MCF 10A (cell line): ENCODE measurements at regions of chr1 and their contacts with region 1.

Region 1: GRCh38 chr1:174022080-174022975 is at the start of gene RC3H1:
- DNase-seq: peak; percentile 95
- H3K4me3 Mint-ChIP-seq: peak within 1 kb of the TSS; percentile 82
- H3K27ac Mint-ChIP-seq: peak within 1 kb of the TSS; percentile 95
- H3K4me1 Mint-ChIP-seq: peaks cover 38% of the 10 kb centered on the region
- H3K27me3 Mint-ChIP-seq: no peaks in the 10 kb centered on the region
- CTCF ChIP-seq: no peak
- total RNA-seq, gene RC3H1: 25.7 and 26.9 TPM in 2 replicates

Region 2: DNA sequence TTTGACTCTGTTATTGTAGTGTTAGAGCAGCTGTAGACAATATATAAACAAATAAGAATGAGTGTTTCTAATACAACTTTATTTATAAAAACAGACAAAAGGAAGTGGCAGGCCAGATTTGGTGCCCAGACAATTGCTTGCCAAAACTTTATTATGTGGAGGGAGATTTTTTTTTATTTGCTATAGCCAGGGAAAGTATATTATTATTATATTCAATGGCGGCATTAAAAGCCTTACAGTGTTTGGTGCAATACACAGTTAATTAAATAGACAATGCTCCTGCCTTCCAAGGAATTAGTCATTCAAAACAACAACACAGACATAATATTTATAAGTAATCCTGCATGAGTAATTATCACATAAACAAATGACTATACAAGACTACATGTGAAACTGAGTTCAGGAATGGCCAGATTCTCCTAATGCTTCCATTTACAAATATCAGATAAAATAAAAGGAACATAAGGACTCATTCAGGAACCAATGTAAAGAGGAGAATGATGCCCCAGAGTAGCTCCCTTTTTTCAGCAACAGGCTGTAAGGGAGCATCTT is 10.4 kb after region 1 on chr1:
- CTCF ChIA-PET with region 1: interaction called, 3 read pairs
- POLR2A ChIA-PET with region 1: interaction called, 19 read pairs
- intact Hi-C with region 1: no loop called
- DNase-seq: no peak
- H3K4me3 Mint-ChIP-seq: no peak overlapping the region
- H3K27ac Mint-ChIP-seq: no peak overlapping the region
- H3K4me1 Mint-ChIP-seq: no peaks in the 10 kb centered on the region
- H3K27me3 Mint-ChIP-seq: no peaks in the 10 kb centered on the region
- CTCF ChIP-seq: no peak

Region 3: GRCh38 chr1:174153085-174153825 is 130.9 kb after region 1 on chr1:
- CTCF ChIA-PET with region 1: no interaction called
- POLR2A ChIA-PET with region 1: interaction called, 15 read pairs
- intact Hi-C with region 1: loop called (anchors 5 kb)
- DNase-seq: peak; percentile 84
- H3K4me3 Mint-ChIP-seq: no peak overlapping the region
- H3K27ac Mint-ChIP-seq: peak overlapping the region; percentile 20
- H3K4me1 Mint-ChIP-seq: peaks cover 27% of the 10 kb centered on the region
- H3K27me3 Mint-ChIP-seq: no peaks in the 10 kb centered on the region
- CTCF ChIP-seq: no peak

Region 4: GRCh38 chr1:174159252-174160108 is 137.2 kb after region 1 on chr1 and contains the start of gene RABGAP1L:
- CTCF ChIA-PET with region 1: no interaction called
- POLR2A ChIA-PET with region 1: interaction called, 17 read pairs
- intact Hi-C with region 1: loop called (anchors 5 kb)
- DNase-seq: peak; percentile 96
- H3K4me3 Mint-ChIP-seq: peak within 1 kb of the TSS; percentile 97
- H3K27ac Mint-ChIP-seq: peak within 1 kb of the TSS; percentile 71
- H3K4me1 Mint-ChIP-seq: peaks cover 42% of the 10 kb centered on the region
- H3K27me3 Mint-ChIP-seq: no peaks in the 10 kb centered on the region
- CTCF ChIP-seq: no peak
- total RNA-seq, gene RABGAP1L: 18.2 and 19.0 TPM in 2 replicates